MCF 10A (cell line): ENCODE measurements at regions of chr10 and their contacts with region 1.

Region 1: GRCh38 chr10:64733980-64734379 is 1212.8 kb downstream of the REEP3 start:
- DNase-seq: peak; percentile 61
- H3K4me3 Mint-ChIP-seq: no peak overlapping the region
- H3K27ac Mint-ChIP-seq: no peak overlapping the region
- H3K4me1 Mint-ChIP-seq: peaks cover 5% of the 10 kb centered on the region
- H3K27me3 Mint-ChIP-seq: no peaks in the 10 kb centered on the region
- CTCF ChIP-seq: peak; percentile 50

Region 2: GRCh38 chr10:64091897-64092296 is 642.1 kb before region 1 on chr10:
- CTCF ChIA-PET with region 1: interaction called, 3 read pairs
- POLR2A ChIA-PET with region 1: no interaction called
- intact Hi-C with region 1: loop called (anchors 10 kb)
- DNase-seq: peak; percentile 46
- H3K4me3 Mint-ChIP-seq: no peak overlapping the region
- H3K27ac Mint-ChIP-seq: no peak overlapping the region
- H3K4me1 Mint-ChIP-seq: peaks cover 6% of the 10 kb centered on the region
- H3K27me3 Mint-ChIP-seq: no peaks in the 10 kb centered on the region
- CTCF ChIP-seq: peak; percentile 15

Region 3: DNA sequence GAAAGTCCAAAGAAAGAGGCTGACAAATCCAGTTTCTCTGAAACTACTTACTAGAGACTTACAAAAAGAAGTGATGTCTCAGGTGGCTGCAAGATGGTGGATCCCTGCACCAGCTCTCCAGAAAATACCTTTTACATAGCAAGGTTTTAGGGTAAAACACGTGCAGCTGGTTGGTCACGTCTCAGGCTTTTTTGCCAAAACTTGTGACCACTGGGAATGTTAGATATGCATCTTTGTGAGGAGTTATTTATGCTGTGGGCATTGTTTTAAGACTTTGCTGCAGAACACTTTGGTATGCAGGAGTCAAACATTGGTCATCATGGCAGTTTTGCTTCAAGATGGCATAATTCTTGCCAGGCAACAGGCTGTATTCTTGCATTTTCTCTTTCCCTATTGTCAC is 140.0 kb after region 1 on chr10:
- CTCF ChIA-PET with region 1: no interaction called
- POLR2A ChIA-PET with region 1: no interaction called
- intact Hi-C with region 1: no loop called
- DNase-seq: no peak
- H3K4me3 Mint-ChIP-seq: no peak overlapping the region
- H3K27ac Mint-ChIP-seq: no peak overlapping the region
- H3K4me1 Mint-ChIP-seq: no peaks in the 10 kb centered on the region
- H3K27me3 Mint-ChIP-seq: no peaks in the 10 kb centered on the region
- CTCF ChIP-seq: no peak

Region 4: GRCh38 chr10:64977915-64978314 is 243.9 kb after region 1 on chr10:
- CTCF ChIA-PET with region 1: no interaction called
- POLR2A ChIA-PET with region 1: no interaction called
- intact Hi-C with region 1: loop called (anchors 10 kb)
- DNase-seq: no peak
- H3K4me3 Mint-ChIP-seq: no peak overlapping the region
- H3K27ac Mint-ChIP-seq: no peak overlapping the region
- H3K4me1 Mint-ChIP-seq: no peaks in the 10 kb centered on the region
- H3K27me3 Mint-ChIP-seq: no peaks in the 10 kb centered on the region
- CTCF ChIP-seq: no peak

Region 5: DNA sequence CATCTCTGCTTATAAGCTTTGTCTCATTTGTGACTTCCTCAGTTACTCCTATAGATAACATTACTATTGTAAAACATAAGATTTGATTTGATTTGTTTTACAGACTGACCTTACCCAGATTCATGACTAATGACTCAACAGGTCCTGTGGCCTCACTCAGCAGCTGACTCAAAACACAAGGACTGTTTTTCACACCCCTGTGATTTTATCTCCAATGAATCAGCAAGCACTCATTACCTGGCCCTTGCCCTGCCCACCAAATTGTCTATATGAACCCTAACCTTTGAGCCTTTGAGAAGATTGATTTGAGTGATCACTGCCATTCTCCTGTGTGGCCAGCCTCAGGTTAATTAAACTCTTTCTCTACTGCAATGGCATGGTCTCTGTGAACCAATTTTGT is 1127.3 kb after region 1 on chr10:
- CTCF ChIA-PET with region 1: no interaction called
- POLR2A ChIA-PET with region 1: no interaction called
- intact Hi-C with region 1: loop called (anchors 5 kb)
- DNase-seq: peak; percentile 58
- H3K4me3 Mint-ChIP-seq: no peak overlapping the region
- H3K27ac Mint-ChIP-seq: peak overlapping the region; percentile 37
- H3K4me1 Mint-ChIP-seq: peaks cover 16% of the 10 kb centered on the region
- H3K27me3 Mint-ChIP-seq: no peaks in the 10 kb centered on the region
- CTCF ChIP-seq: no peak

Region 6: DNA sequence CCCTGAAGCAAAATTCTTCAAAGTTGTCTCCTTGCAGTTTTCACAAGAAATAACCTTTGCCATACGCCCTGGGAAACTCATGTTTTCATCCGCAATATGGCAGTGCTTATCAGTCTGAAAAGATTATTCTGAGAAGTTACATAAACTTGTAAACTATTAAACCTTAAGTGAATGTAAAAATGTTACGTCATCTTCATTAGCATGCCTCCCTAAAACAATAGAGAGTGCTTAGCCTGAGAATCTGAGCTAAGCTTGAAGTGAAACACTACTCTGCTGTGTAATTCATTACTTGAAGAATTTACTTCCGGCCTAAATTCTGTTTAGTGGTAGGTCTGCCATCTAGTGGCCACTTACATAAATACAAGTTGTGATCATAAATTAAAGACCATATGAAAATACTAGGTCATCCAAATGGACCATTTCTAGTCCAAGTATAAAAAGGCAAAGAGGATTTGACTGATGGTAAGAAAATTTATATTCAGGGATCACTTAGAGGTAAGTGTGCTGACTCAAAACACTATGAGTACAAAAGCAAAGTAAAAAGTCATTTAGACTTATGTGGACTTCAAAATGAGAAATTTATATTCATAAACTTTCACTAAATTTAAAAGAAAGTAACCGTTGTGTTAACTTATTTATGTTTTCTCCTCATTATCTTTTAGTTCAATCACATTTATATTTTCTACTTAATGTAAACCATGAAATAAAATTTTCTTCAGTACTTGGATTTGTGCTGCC is 1446.8 kb after region 1 on chr10:
- CTCF ChIA-PET with region 1: interaction called, 5 read pairs
- POLR2A ChIA-PET with region 1: no interaction called
- intact Hi-C with region 1: loop called (anchors 5 kb)
- DNase-seq: peak; percentile 68
- H3K4me3 Mint-ChIP-seq: no peak overlapping the region
- H3K27ac Mint-ChIP-seq: no peak overlapping the region
- H3K4me1 Mint-ChIP-seq: no peaks in the 10 kb centered on the region
- H3K27me3 Mint-ChIP-seq: no peaks in the 10 kb centered on the region
- CTCF ChIP-seq: peak; percentile 59